ENCODE measurements at regions of chr3 and their contacts with region 1.

Region 1: GRCh38 chr3:42101048-42101447 is 9.9 kb downstream of the TRAK1 start:
- DNase-seq: no peak
- H3K4me3 Mint-ChIP-seq: no peak overlapping the region
- H3K27ac Mint-ChIP-seq: no peak overlapping the region
- H3K4me1 Mint-ChIP-seq: peaks cover 33% of the 10 kb centered on the region
- H3K27me3 Mint-ChIP-seq: no peaks in the 10 kb centered on the region
- CTCF ChIP-seq: no peak

Region 2: GRCh38 chr3:41893977-41894376 is 207.1 kb before region 1 on chr3:
- CTCF ChIA-PET with region 1: no interaction called
- intact Hi-C with region 1: loop called (anchors 1 kb)
- DNase-seq: peak; percentile 45
- H3K4me3 Mint-ChIP-seq: no peak overlapping the region
- H3K27ac Mint-ChIP-seq: no peak overlapping the region
- H3K4me1 Mint-ChIP-seq: no peaks in the 10 kb centered on the region
- H3K27me3 Mint-ChIP-seq: no peaks in the 10 kb centered on the region
- CTCF ChIP-seq: no peak

Region 3: GRCh38 chr3:41997702-41998550 is 103.1 kb before region 1 on chr3:
- CTCF ChIA-PET with region 1: interaction called, 6 read pairs
- intact Hi-C with region 1: loop called (anchors 1 kb)
- DNase-seq: peak; percentile 17
- H3K4me3 Mint-ChIP-seq: no peak overlapping the region
- H3K27ac Mint-ChIP-seq: no peak overlapping the region
- H3K4me1 Mint-ChIP-seq: no peaks in the 10 kb centered on the region
- H3K27me3 Mint-ChIP-seq: no peaks in the 10 kb centered on the region
- CTCF ChIP-seq: peak; percentile 19

Region 4: GRCh38 chr3:42025370-42026138 is 75.5 kb before region 1 on chr3:
- CTCF ChIA-PET with region 1: interaction called, 11 read pairs
- intact Hi-C with region 1: no loop called
- DNase-seq: peak; percentile 72
- H3K4me3 Mint-ChIP-seq: peak overlapping the region; percentile 63
- H3K27ac Mint-ChIP-seq: peak overlapping the region; percentile 72
- H3K4me1 Mint-ChIP-seq: peaks cover 42% of the 10 kb centered on the region
- H3K27me3 Mint-ChIP-seq: no peaks in the 10 kb centered on the region
- CTCF ChIP-seq: no peak

Region 5: GRCh38 chr3:42118762-42119361 is 17.8 kb after region 1 on chr3:
- CTCF ChIA-PET with region 1: no interaction called
- intact Hi-C with region 1: no loop called
- DNase-seq: peak; percentile 78
- H3K4me3 Mint-ChIP-seq: peak overlapping the region; percentile 40
- H3K27ac Mint-ChIP-seq: peak overlapping the region; percentile 96
- H3K4me1 Mint-ChIP-seq: peaks cover 67% of the 10 kb centered on the region
- H3K27me3 Mint-ChIP-seq: no peaks in the 10 kb centered on the region
- CTCF ChIP-seq: peak; percentile 42